ENCODE measurements at regions of chr2 and their contacts with region 1.

Region 1: GRCh38 chr2:3558205-3559014 is at the start of gene RNASEH1:
- DNase-seq: peak; percentile 90 to 99 (median 96)
- ATAC-seq: peak; percentile 96 to 98 (median 98)
- H3K4me3 ChIP-seq: peak within 1 kb of the TSS; percentile 76 to 98
- H3K4me3 Mint-ChIP-seq: peak within 1 kb of the TSS; percentile 84 to 90 (median 87)
- H3K27ac ChIP-seq: peak within 1 kb of the TSS; percentile 92
- H3K27ac Mint-ChIP-seq: peak within 1 kb of the TSS; percentile 83 to 92
- H3K4me1 ChIP-seq: peaks cover 14 to 15% of the 10 kb centered on the region in 2 experiments
- H3K4me1 Mint-ChIP-seq: peaks cover 19 to 38% (median 32%) of the 10 kb centered on the region in 3 donors
- H3K27me3 ChIP-seq: no peaks in the 10 kb centered on the region
- H3K27me3 Mint-ChIP-seq: no peaks in the 10 kb centered on the region
- total RNA-seq, gene RNASEH1: 24.1 to 28.4 (median 25.2) TPM

Region 2: DNA sequence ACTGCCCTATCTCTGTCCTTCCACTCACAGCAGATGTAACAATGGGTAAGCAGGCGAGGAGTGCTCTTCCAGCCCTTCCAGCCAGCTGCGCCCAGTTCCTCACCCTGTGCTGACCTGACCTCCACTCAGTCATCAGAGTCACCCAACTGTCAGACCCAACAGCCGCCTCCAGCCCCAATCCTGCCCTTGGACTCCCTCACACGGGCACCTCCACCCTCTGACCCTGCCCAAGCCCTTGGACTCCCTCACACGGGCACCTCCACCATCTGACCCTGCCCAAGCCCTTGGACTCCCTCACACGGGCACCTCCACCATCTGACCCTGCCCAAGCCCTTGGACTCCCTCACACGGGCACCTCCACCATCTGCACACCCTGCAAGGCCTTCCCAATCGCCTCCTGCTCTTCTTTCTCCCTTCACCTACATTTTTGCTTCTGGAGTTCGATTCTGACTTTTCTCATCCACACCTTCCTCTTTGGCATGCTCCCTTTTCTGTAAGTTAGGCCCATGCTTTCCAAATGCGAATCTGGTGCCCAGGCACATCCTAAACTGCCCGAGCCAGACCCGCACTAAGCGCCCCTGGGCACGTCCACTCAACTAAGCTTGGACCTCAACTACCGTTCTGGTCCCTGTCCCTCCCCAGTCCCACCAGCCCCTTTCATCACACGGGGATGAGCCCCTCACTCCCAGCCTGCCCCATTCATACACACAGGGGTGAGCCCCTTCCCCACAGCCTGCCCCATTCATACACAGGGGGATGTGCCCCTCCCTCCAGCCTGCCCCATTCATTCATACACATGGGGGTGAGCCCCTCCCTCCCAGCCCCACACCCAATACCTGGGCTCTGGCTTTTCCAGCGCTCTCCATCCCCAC is 196.7 kb before region 1 on chr2:
- CTCF ChIA-PET with region 1: no interaction called
- POLR2A ChIA-PET with region 1: no interaction called
- DNase-seq: no peak
- ATAC-seq: no peak
- H3K4me3 ChIP-seq: no peak overlapping the region
- H3K4me3 Mint-ChIP-seq: no peak overlapping the region
- H3K27ac ChIP-seq: no peak overlapping the region
- H3K27ac Mint-ChIP-seq: no peak overlapping the region
- H3K4me1 ChIP-seq: no peaks in the 10 kb centered on the region
- H3K4me1 Mint-ChIP-seq: peaks cover 38 to 42% (median 40%) of the 10 kb centered on the region in 3 donors
- H3K27me3 ChIP-seq: no peaks in the 10 kb centered on the region
- H3K27me3 Mint-ChIP-seq: no peaks in the 10 kb centered on the region

Region 3: DNA sequence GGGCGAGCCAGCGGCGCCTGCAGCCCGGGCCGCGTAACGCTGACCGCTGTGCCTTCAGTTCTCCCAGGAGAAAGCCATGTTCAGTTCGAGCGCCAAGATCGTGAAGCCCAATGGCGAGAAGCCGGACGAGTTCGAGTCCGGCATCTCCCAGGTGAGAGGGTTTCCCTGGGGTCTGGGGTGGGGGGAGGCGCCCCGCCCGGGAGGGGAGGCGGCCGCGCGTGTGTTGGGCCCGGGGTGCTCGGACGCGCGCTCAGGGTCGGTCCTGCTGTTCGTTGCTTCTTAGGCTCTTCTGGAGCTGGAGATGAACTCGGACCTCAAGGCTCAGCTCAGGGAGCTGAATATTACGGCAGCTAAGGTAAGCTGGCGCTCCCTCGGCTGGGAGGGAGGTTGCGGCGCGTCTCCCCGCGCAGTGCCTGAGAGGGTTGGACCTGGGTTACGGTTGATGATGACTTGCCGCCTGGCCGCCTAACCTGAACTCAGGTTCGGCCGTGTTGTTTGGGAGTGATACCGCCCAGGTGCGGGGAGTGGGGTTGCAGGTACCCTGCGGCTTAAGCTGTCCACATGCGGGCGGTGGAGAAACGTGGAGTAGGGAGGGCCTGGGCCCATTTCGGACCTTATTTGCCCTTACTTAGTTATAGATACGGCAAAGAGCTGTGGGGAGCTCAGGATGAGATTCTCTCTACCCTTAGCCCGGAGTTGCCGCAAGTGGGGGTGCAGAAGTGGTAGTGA is 17.3 kb after region 1 on chr2:
- CTCF ChIA-PET with region 1: interaction called, 3 to 10 read pairs
- POLR2A ChIA-PET with region 1: interaction called in 1 of 2 experiments, 4 read pairs
- DNase-seq: peak in 27 of 35 experiments; percentile 7 to 54 (median 25)
- ATAC-seq: peak; percentile 31 to 58 (median 46)
- H3K4me3 ChIP-seq: peak overlapping the region; percentile 66 to 86
- H3K4me3 Mint-ChIP-seq: peak overlapping the region; percentile 84 to 90 (median 86)
- H3K27ac ChIP-seq: peak overlapping the region; percentile 90
- H3K27ac Mint-ChIP-seq: peak overlapping the region; percentile 93 to 96
- H3K4me1 ChIP-seq: peaks cover 18 to 23% of the 10 kb centered on the region in 2 experiments
- H3K4me1 Mint-ChIP-seq: peaks cover 45 to 51% (median 51%) of the 10 kb centered on the region in 3 donors
- H3K27me3 ChIP-seq: no peaks in the 10 kb centered on the region
- H3K27me3 Mint-ChIP-seq: no peaks in the 10 kb centered on the region

Measured in T-cell (primary cell).